ENCODE measurements at regions of chrX and their contacts with region 1.

Region 1: DNA sequence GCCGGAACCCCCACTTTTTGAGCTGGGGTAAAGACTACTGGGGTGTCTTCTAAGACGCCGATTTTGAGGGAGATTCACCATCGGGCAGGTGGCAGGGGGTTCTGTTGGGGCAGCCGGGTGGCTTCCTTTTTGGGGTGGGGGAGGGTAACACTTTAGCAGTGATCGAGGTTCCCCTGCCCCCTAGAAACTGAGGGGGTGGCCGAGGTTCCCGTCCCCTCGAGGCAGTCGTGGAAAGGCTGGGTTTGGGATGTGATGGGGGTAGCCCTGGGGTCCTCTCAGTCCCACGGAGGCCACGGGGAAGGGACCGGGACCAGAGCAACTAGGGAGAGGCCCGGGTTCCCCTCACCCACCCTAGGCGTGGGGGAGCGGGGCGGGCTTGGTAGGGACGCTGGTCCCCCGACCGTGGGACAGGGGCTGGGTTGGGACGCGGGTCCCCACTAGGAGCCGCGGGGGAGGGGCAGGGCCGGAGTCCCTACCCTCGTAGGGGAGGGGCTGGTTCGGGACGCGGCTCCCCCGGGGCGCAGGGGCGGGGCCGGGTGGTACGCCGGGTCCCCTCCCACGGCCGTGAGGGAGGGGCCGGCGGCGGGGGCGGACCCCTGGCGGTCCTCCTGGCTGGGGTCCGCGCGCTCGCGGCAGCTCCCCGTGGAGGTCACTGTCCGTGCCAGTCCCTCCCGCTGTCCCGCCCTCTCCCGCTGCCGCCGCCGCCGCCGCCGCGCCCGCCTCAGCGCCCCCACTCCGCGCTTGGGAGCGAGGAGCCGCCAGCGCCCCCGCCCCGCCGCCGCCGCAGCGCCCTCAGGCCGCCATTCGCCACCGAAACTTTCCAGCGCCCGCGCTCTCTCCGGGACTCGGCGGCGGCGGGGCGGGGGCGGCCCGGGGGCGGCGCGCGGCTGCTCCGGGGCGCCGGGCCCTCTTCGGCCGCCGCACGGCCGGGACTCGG is at the start of gene TBL1X:
- DNase-seq: peak in 1 of 2 experiments; percentile 59
- H3K4me3 ChIP-seq: peak within 1 kb of the TSS; percentile 73
- H3K27ac ChIP-seq: peak within 1 kb of the TSS; percentile 95
- H3K4me1 ChIP-seq: peaks cover 21% of the 10 kb centered on the region
- H3K27me3 ChIP-seq: no peaks in the 10 kb centered on the region
- CTCF ChIP-seq: no peak
- total RNA-seq, gene TBL1X: 14.9 and 17.6 TPM in 2 replicates

Region 2: GRCh38 chrX:9271789-9272525 is 192.7 kb before region 1 on chrX:
- CTCF ChIA-PET with region 1: no interaction called
- POLR2A ChIA-PET with region 1: no interaction called
- intact Hi-C with region 1: no loop called
- DNase-seq: no peak
- H3K4me3 ChIP-seq: no peak overlapping the region
- H3K27ac ChIP-seq: no peak overlapping the region
- H3K4me1 ChIP-seq: 0 out of 2 replicates have a peak, but pooled peaks cover 3% of the 10 kb centered on the region
- H3K27me3 ChIP-seq: peaks cover 16% of the 10 kb centered on the region
- CTCF ChIP-seq: no peak

Region 3: GRCh38 chrX:9341291-9342201 is 123.2 kb before region 1 on chrX:
- CTCF ChIA-PET with region 1: no interaction called
- POLR2A ChIA-PET with region 1: no interaction called
- intact Hi-C with region 1: loop called (anchors 2 kb)
- DNase-seq: peak in 1 of 2 experiments; percentile 77
- H3K4me3 ChIP-seq: peak overlapping the region; percentile 43; the same call in 1 of the 2 replicates
- H3K27ac ChIP-seq: peak overlapping the region; percentile 76
- H3K4me1 ChIP-seq: peaks cover 14% of the 10 kb centered on the region
- H3K27me3 ChIP-seq: no peaks in the 10 kb centered on the region
- CTCF ChIP-seq: no peak

Region 4: GRCh38 chrX:9356846-9357245 is 107.9 kb before region 1 on chrX:
- CTCF ChIA-PET with region 1: no interaction called
- POLR2A ChIA-PET with region 1: no interaction called
- intact Hi-C with region 1: no loop called
- DNase-seq: no peak
- H3K4me3 ChIP-seq: no peak overlapping the region
- H3K27ac ChIP-seq: no peak overlapping the region
- H3K4me1 ChIP-seq: peaks cover 16% of the 10 kb centered on the region
- H3K27me3 ChIP-seq: no peaks in the 10 kb centered on the region
- CTCF ChIP-seq: no peak

Region 5: DNA sequence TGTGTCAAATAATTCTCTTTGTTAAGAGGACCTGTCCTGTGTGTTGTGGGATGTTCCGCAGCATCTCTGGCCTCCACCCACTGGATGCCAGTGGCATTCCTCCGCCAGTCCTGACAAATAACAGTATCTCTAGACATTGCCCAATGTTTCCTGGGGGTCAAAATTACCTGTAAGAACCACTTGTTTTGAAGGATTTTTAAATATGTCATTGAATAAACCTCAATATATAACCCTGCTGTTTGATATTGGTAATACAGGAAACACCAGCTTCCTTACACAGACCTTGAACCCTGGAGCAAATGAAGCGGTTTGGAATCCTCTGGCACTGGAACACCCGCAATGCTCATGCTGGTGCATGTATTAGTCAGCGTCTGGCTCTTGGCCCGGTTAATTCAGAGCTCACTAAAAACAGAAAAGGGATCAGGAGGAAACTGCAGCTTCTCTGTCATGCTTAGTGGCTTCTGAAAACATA is 101.5 kb after region 1 on chrX:
- CTCF ChIA-PET with region 1: no interaction called
- POLR2A ChIA-PET with region 1: no interaction called
- intact Hi-C with region 1: loop called (anchors 2 kb)
- DNase-seq: peak in 1 of 2 experiments; percentile 34
- H3K4me3 ChIP-seq: no peak overlapping the region
- H3K27ac ChIP-seq: no peak overlapping the region
- H3K4me1 ChIP-seq: no peaks in the 10 kb centered on the region
- H3K27me3 ChIP-seq: no peaks in the 10 kb centered on the region
- CTCF ChIP-seq: no peak

Measured in PC-9 (cell line).